AG04449 (cell line): ENCODE measurements at regions of chr16 and their contacts with region 1.

Region 1: GRCh38 chr16:11535471-11535870 is 51.2 kb downstream of the LITAF start:
- DNase-seq: no peak
- H3K4me3 ChIP-seq: no peak overlapping the region
- CTCF ChIP-seq: no peak

Region 2: DNA sequence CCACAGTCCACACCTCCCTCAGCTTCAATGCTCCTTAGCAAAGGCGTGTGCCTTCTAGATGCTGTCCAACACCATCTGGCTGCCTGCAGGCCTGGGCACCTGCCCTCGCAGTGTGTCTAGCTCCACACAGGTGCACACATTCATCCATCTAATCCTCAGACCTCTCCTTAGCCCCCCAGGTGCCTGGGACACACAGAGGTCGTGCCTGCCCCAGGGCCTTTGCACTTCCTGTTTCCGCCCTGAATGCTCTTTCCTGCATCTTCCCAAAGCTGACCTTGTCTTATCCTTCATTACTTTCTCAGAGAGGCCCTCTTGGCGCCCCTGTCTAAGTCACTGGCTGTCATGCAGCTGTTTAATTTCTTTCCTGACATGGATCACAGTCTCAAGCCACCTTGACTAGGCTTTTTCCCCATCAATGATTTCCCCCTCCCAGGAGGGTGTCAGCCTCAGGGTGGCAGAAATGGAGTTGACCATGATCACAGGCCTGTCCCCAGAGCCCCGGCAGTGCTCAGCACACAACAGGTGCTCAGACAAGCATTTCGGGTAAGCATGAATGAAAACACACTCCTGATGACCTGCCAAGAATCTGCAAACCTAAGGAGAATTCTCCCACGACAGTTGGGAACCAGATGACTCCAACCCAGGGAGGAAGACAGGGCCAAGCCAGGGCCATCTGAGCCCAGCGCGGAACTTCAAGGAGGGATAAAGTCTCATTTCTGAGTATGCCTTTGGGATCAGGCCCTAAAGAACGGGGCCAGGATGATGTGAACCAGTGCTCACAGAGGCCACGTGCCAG is 25.1 kb before region 1 on chr16:
- CTCF ChIA-PET with region 1: interaction called, 31 read pairs
- POLR2A ChIA-PET with region 1: interaction called, 3 read pairs
- DNase-seq: no peak
- H3K4me3 ChIP-seq: no peak overlapping the region
- CTCF ChIP-seq: no peak

Region 3: DNA sequence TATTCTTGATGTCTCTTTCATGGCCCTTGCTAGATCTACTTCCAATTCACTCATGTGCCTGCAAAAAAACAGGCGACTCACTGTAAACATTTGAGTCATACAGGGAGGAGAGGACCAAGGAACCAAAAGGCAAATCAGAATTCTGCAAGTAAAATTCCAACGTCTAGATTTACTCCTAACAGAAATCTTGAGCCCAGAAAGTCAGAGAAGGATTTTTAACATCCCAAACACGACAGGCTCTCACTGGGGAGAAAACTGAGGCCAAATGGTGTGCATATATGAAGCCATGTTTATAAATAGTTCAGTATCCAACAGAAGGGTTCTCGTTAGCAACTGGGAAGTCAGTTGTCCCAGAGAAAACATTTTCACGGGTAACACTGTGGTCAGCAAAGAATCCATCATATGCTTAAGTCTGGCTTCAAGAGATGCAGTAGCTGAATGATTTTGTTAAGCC is 11.2 kb after region 1 on chr16:
- CTCF ChIA-PET with region 1: interaction called, 12 read pairs
- POLR2A ChIA-PET with region 1: no interaction called
- DNase-seq: peak; percentile 23
- H3K4me3 ChIP-seq: no peak overlapping the region
- CTCF ChIP-seq: no peak

Region 4: GRCh38 chr16:11557801-11558200 is 22.3 kb after region 1 on chr16:
- CTCF ChIA-PET with region 1: interaction called, 15 read pairs
- POLR2A ChIA-PET with region 1: no interaction called
- DNase-seq: no peak
- H3K4me3 ChIP-seq: no peak overlapping the region
- CTCF ChIP-seq: no peak

Region 5: GRCh38 chr16:11632464-11632939 is 97.0 kb after region 1 on chr16:
- CTCF ChIA-PET with region 1: interaction called, 12 read pairs
- POLR2A ChIA-PET with region 1: no interaction called
- DNase-seq: peak; percentile 57
- H3K4me3 ChIP-seq: no peak overlapping the region
- CTCF ChIP-seq: no peak

Region 6: GRCh38 chr16:11639925-11640899 is 104.7 kb after region 1 on chr16:
- CTCF ChIA-PET with region 1: interaction called, 76 read pairs
- POLR2A ChIA-PET with region 1: interaction called, 5 read pairs
- DNase-seq: peak; percentile 97
- H3K4me3 ChIP-seq: no peak overlapping the region
- CTCF ChIP-seq: no peak